ENCODE measurements at regions of chr4 and their contacts with region 1.

Region 1: DNA sequence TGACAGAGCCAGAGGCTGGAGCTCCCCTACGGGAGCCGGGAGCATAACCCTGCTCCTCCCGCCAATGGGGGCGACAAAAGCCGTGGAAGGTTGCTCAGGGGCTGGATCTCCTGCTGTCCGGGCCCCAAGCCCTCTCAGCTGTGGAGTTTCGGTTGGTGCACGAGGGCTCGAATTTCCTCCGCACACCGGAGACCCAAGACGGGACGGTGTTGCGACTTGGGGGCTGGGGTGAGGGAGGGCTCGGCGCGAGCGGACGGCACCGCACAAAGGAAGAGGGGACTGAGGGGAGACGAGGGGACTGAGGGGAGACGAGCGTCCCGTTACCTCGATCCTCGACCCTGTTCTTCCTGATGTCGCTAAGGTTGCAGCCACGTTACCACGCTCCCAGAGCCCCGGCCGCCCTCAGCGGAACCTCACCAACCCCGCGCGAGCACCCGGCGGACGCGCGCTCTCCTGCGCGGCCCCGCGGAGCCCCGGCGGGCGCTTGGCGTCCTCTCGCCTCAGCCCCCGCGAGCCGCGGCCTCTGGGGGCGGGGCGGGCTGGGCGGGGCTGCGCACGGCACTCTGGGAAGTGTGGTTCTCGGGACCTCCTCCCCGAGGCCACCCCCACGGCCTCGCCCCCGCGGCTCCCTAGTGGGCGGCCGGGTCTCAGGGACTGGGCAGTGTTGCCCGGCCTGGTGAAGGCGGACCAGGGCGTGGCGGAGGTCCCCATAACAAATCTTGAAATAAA is at the start of gene KLHL8:
- DNase-seq: peak; percentile 93
- ATAC-seq: peak; percentile 92
- H3K4me3 Mint-ChIP-seq: peak within 1 kb of the TSS; percentile 95
- H3K27ac Mint-ChIP-seq: peak within 1 kb of the TSS; percentile 93
- H3K4me1 Mint-ChIP-seq: peaks cover 17% of the 10 kb centered on the region
- H3K27me3 Mint-ChIP-seq: no peaks in the 10 kb centered on the region
- CTCF ChIP-seq: no peak
- total RNA-seq, gene KLHL8: 10.5 and 12.6 TPM in 2 replicates

Region 2: GRCh38 chr4:86359944-86360478 is 860.2 kb before region 1 on chr4 and contains the start of gene MAPK10:
- CTCF ChIA-PET with region 1: no interaction called
- POLR2A ChIA-PET with region 1: no interaction called
- intact Hi-C with region 1: loop called (anchors 5 kb)
- DNase-seq: peak; percentile 55
- ATAC-seq: peak; percentile 98
- H3K4me3 Mint-ChIP-seq: peak within 1 kb of the TSS; percentile 83
- H3K27ac Mint-ChIP-seq: peak within 1 kb of the TSS; percentile 79
- H3K4me1 Mint-ChIP-seq: peaks cover 18% of the 10 kb centered on the region
- H3K27me3 Mint-ChIP-seq: no peaks in the 10 kb centered on the region
- CTCF ChIP-seq: no peak
- total RNA-seq, gene MAPK10: 0.20 and 0.75 TPM in 2 replicates

Region 3: GRCh38 chr4:87209696-87210095 is 10.6 kb before region 1 on chr4:
- CTCF ChIA-PET with region 1: interaction called, 8 read pairs
- POLR2A ChIA-PET with region 1: interaction called, 38 read pairs
- intact Hi-C with region 1: loop called (anchors 1 kb)
- DNase-seq: peak; percentile 22
- ATAC-seq: peak; percentile 96
- H3K4me3 Mint-ChIP-seq: peak overlapping the region; percentile 71
- H3K27ac Mint-ChIP-seq: peak overlapping the region; percentile 80
- H3K4me1 Mint-ChIP-seq: peaks cover 20% of the 10 kb centered on the region
- H3K27me3 Mint-ChIP-seq: no peaks in the 10 kb centered on the region
- CTCF ChIP-seq: no peak

Region 4: GRCh38 chr4:87235020-87235671 is 14.9 kb after region 1 on chr4:
- CTCF ChIA-PET with region 1: interaction called, 6 read pairs
- POLR2A ChIA-PET with region 1: interaction called, 9 read pairs
- intact Hi-C with region 1: loop called (anchors 1 kb)
- DNase-seq: no peak
- ATAC-seq: no peak
- H3K4me3 Mint-ChIP-seq: peak overlapping the region; percentile 80
- H3K27ac Mint-ChIP-seq: no peak overlapping the region
- H3K4me1 Mint-ChIP-seq: peaks cover 3% of the 10 kb centered on the region
- H3K27me3 Mint-ChIP-seq: peaks cover 1% of the 10 kb centered on the region
- CTCF ChIP-seq: no peak

Region 5: GRCh38 chr4:87363567-87363966 is 143.3 kb after region 1 on chr4:
- CTCF ChIA-PET with region 1: no interaction called
- POLR2A ChIA-PET with region 1: no interaction called
- intact Hi-C with region 1: no loop called
- DNase-seq: no peak
- ATAC-seq: no peak
- H3K4me3 Mint-ChIP-seq: no peak overlapping the region
- H3K27ac Mint-ChIP-seq: no peak overlapping the region
- H3K4me1 Mint-ChIP-seq: no peaks in the 10 kb centered on the region
- H3K27me3 Mint-ChIP-seq: no peaks in the 10 kb centered on the region
- CTCF ChIP-seq: no peak

Region 6: DNA sequence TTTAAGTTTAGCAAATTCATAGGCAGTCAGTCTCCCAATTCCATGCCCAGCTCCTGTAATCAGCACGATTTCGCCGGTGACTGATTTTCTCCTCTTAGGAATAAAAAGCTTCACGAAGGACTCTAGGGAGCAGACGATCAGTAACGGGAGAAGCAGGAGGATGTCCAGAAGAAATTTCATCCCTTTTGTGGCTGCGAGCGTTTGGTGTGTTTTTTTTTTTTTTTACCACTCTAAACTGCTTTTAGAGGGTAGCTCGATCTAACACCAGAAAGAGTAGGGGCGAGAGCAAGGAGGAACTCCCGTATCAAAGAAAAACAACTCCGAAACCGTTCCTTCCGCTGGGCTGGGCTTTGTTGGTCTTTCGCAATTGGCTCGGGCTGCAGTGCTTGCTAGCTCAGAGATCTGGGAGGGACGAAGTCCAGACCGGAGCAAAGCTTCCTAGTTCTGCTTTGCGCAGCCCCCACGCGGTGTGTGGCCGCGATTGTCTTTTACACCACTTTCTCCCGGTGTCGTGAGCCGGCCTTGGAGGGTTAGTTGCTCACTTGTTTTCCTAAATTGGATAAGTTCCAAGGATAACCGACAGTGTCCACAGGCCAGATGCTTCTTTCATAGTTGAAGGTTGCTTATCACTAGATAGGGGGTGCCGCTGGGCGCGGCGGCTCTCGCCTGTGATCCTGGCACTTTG is 170.8 kb after region 1 on chr4 and contains the start of gene HSD17B11:
- CTCF ChIA-PET with region 1: no interaction called
- POLR2A ChIA-PET with region 1: no interaction called
- intact Hi-C with region 1: loop called (anchors 5 kb)
- DNase-seq: peak; percentile 70
- ATAC-seq: peak; percentile 99
- H3K4me3 Mint-ChIP-seq: peak within 1 kb of the TSS; percentile 97
- H3K27ac Mint-ChIP-seq: peak within 1 kb of the TSS; percentile 96
- H3K4me1 Mint-ChIP-seq: peaks cover 48% of the 10 kb centered on the region
- H3K27me3 Mint-ChIP-seq: no peaks in the 10 kb centered on the region
- CTCF ChIP-seq: no peak
- total RNA-seq, gene HSD17B11: 26.2 and 28.4 TPM in 2 replicates

Region 7: GRCh38 chr4:87422104-87423052 is 202.1 kb after region 1 on chr4 and contains the start of gene NUDT9:
- CTCF ChIA-PET with region 1: no interaction called
- POLR2A ChIA-PET with region 1: interaction called, 6 read pairs
- intact Hi-C with region 1: loop called (anchors 1 kb)
- DNase-seq: peak; percentile 80
- ATAC-seq: peak; percentile 86
- H3K4me3 Mint-ChIP-seq: peak within 1 kb of the TSS; percentile 100
- H3K27ac Mint-ChIP-seq: peak within 1 kb of the TSS; percentile 99
- H3K4me1 Mint-ChIP-seq: peaks cover 40% of the 10 kb centered on the region
- H3K27me3 Mint-ChIP-seq: no peaks in the 10 kb centered on the region
- CTCF ChIP-seq: no peak
- total RNA-seq, gene NUDT9: 18.5 and 21.1 TPM in 2 replicates

Region 8: GRCh38 chr4:88378691-88379559 is 1158.7 kb after region 1 on chr4 and contains the start of gene HERC6:
- CTCF ChIA-PET with region 1: no interaction called
- POLR2A ChIA-PET with region 1: no interaction called
- intact Hi-C with region 1: loop called (anchors 10 kb)
- DNase-seq: peak; percentile 64
- ATAC-seq: peak; percentile 80
- H3K4me3 Mint-ChIP-seq: peak within 1 kb of the TSS; percentile 92
- H3K27ac Mint-ChIP-seq: peak within 1 kb of the TSS; percentile 91
- H3K4me1 Mint-ChIP-seq: peaks cover 31% of the 10 kb centered on the region
- H3K27me3 Mint-ChIP-seq: no peaks in the 10 kb centered on the region
- CTCF ChIP-seq: no peak
- total RNA-seq, gene HERC6: 11.4 and 12.2 TPM in 2 replicates

Region 9: DNA sequence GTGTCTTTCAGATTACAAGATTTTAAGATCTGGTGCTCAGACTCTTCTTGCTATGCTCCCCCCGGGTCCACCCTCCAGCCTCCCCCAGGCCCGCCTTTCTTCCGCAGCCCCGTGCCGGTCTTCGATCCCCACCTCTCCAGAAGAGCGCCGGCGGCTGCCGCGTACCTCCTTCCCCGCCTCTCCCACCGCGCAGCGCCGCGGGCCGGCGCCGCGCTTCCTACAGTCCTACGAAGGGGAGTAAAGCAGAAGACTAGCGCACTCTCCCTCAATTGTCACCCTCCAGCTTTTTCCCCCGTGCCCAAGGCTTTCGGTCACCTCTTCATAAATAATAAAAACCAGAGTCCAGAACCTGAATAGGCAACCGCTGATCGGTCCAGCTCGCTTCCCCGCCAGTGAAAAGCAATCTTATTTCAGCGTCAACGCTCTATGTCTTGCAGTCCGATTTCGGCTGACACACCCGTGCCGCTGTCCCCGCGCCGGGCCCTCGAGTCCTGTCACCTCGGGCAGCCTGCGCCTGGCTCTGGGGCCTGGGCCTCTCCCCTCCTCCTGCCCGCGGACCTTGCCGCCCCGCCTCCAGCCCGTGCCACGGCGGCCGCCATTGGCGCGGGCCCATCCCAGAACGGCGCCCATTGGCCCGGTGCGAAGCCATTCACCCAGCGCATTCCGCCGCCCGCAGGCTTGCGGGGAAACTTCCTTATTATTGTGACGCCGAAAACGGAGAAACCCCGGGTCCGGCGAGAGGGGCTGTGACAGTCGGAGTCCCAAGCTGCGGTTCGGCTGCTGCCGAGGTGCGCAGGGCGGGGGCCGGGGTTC is 1371.7 kb after region 1 on chr4 and contains the start of gene HERC3:
- CTCF ChIA-PET with region 1: no interaction called
- POLR2A ChIA-PET with region 1: no interaction called
- intact Hi-C with region 1: no loop called
- DNase-seq: peak; percentile 87
- ATAC-seq: peak; percentile 93
- H3K4me3 Mint-ChIP-seq: peak within 1 kb of the TSS; percentile 94
- H3K27ac Mint-ChIP-seq: peak within 1 kb of the TSS; percentile 84
- H3K4me1 Mint-ChIP-seq: peaks cover 32% of the 10 kb centered on the region
- H3K27me3 Mint-ChIP-seq: no peaks in the 10 kb centered on the region
- CTCF ChIP-seq: no peak
- total RNA-seq, gene HERC3: 23.8 and 27.5 TPM in 2 replicates

Measured in activated B cell treated with CpG ODN at 0.5 μM for 24 hours (primary cell).